B cell (primary cell): ENCODE measurements at regions of chr5 and their contacts with region 1.

Region 1: GRCh38 chr5:156419661-156420060 is 92.7 kb downstream of the SGCD start:
- DNase-seq: no peak
- ATAC-seq: no peak
- H3K4me3 ChIP-seq: no peak overlapping the region
- H3K4me3 Mint-ChIP-seq: no peak overlapping the region
- H3K27ac ChIP-seq: no peak overlapping the region
- H3K27ac Mint-ChIP-seq: no peak overlapping the region
- H3K4me1 ChIP-seq: no peaks in the 10 kb centered on the region
- H3K4me1 Mint-ChIP-seq: no peaks in the 10 kb centered on the region
- H3K27me3 ChIP-seq: no peaks in the 10 kb centered on the region
- H3K27me3 Mint-ChIP-seq: peaks cover 3% of the 10 kb centered on the region
- CTCF ChIP-seq: no peak

Region 2: GRCh38 chr5:156383510-156384265 is 36.0 kb before region 1 on chr5:
- CTCF ChIA-PET with region 1: no interaction called
- POLR2A ChIA-PET with region 1: no interaction called
- intact Hi-C with region 1: loop called (anchors 5 kb)
- DNase-seq: no peak
- ATAC-seq: no peak
- H3K4me3 ChIP-seq: no peak overlapping the region
- H3K4me3 Mint-ChIP-seq: no peak overlapping the region
- H3K27ac ChIP-seq: no peak overlapping the region
- H3K27ac Mint-ChIP-seq: no peak overlapping the region
- H3K4me1 ChIP-seq: no peaks in the 10 kb centered on the region
- H3K4me1 Mint-ChIP-seq: no peaks in the 10 kb centered on the region
- H3K27me3 ChIP-seq: no peaks in the 10 kb centered on the region
- H3K27me3 Mint-ChIP-seq: peaks cover 3% of the 10 kb centered on the region
- CTCF ChIP-seq: no peak

Region 3: GRCh38 chr5:156405988-156406387 is 13.7 kb before region 1 on chr5:
- CTCF ChIA-PET with region 1: no interaction called
- POLR2A ChIA-PET with region 1: no interaction called
- intact Hi-C with region 1: no loop called
- DNase-seq: no peak
- ATAC-seq: no peak
- H3K4me3 ChIP-seq: no peak overlapping the region
- H3K4me3 Mint-ChIP-seq: no peak overlapping the region
- H3K27ac ChIP-seq: no peak overlapping the region
- H3K27ac Mint-ChIP-seq: peak overlapping the region; percentile 2
- H3K4me1 ChIP-seq: peaks cover 10 to 17% of the 10 kb centered on the region in 2 donors
- H3K4me1 Mint-ChIP-seq: peaks cover 15% of the 10 kb centered on the region
- H3K27me3 ChIP-seq: no peaks in the 10 kb centered on the region
- H3K27me3 Mint-ChIP-seq: peaks cover 8% of the 10 kb centered on the region
- CTCF ChIP-seq: no peak

Region 4: DNA sequence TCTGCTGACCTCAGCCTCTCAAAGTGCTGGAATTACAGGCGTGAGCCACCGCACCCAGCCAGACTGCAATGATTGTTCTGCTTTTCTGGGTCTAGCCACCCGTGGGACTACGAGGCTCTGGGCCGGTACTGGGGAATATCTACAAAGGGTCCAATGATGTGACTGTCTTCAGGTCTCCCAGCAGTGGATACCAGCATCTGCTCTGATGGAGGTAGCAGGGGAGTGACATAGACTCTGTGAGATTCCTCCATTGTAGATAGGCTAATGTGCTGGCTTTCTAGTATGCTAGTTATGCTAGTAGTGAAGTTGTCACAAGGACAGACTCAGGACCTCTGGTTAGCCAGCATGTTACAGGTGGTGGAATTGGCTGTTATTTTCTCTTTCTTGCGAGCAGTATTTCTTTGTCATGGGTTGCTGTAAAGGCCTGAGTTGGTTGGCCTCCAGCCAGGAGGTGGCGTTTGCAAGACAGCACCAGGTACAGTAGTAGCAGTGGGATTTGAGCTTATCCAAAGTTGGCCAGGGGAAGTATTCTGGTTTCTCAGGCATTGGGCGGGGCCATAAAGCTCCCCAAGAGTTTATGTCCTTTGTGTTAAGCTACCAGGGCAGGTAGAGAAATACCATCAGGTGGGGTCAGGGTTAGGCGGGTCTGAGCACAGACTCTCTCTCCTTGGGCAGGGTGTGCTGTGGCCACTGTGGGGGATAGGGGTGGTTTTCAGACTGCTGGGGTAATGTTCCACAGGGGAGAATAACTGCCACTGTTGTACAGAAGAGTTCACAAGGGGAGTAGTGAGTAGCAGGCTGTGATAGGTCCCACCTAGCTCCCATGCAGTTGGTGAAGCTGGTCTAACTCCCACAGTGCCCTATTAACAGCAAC is 12.5 kb after region 1 on chr5:
- CTCF ChIA-PET with region 1: no interaction called
- POLR2A ChIA-PET with region 1: no interaction called
- intact Hi-C with region 1: no loop called
- DNase-seq: no peak
- ATAC-seq: no peak
- H3K4me3 ChIP-seq: no peak overlapping the region
- H3K4me3 Mint-ChIP-seq: no peak overlapping the region
- H3K27ac ChIP-seq: no peak overlapping the region
- H3K27ac Mint-ChIP-seq: no peak overlapping the region
- H3K4me1 ChIP-seq: no peaks in the 10 kb centered on the region
- H3K4me1 Mint-ChIP-seq: no peaks in the 10 kb centered on the region
- H3K27me3 ChIP-seq: no peaks in the 10 kb centered on the region
- H3K27me3 Mint-ChIP-seq: peaks cover 8% of the 10 kb centered on the region
- CTCF ChIP-seq: no peak

Region 5: DNA sequence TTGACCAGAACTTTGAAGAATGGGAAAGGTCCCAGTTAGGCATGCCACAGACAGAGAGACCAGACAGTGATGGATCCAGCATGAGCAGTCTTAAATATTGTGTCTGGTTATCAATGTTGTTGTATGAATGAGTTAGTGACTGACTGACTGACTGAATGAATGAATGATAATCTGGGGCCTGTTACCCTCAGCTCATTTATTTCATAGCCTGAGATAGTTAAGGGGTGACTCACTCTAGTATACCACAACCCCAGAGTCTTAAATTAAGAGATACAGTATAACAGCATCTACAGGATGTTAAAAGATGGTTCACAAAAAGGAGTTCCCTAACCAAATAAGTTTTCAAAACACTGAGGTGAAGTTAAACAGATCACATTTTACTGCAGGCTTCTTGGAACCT is 40.8 kb after region 1 on chr5:
- CTCF ChIA-PET with region 1: no interaction called
- POLR2A ChIA-PET with region 1: no interaction called
- intact Hi-C with region 1: no loop called
- DNase-seq: no peak
- ATAC-seq: no peak
- H3K4me3 ChIP-seq: no peak overlapping the region
- H3K4me3 Mint-ChIP-seq: no peak overlapping the region
- H3K27ac ChIP-seq: no peak overlapping the region
- H3K27ac Mint-ChIP-seq: no peak overlapping the region
- H3K4me1 ChIP-seq: no peaks in the 10 kb centered on the region
- H3K4me1 Mint-ChIP-seq: no peaks in the 10 kb centered on the region
- H3K27me3 ChIP-seq: no peaks in the 10 kb centered on the region
- H3K27me3 Mint-ChIP-seq: peaks cover 6% of the 10 kb centered on the region
- CTCF ChIP-seq: no peak